Activated CD4-positive, alpha-beta T cell treated with anti-CD3 and anti-CD28 coated beads, Interleukin-2, amount 10 ng/mL, durations not matched to agents 7 days and 5 days (primary cell): ENCODE measurements at regions of chr6 and their contacts with region 1.

Region 1: DNA sequence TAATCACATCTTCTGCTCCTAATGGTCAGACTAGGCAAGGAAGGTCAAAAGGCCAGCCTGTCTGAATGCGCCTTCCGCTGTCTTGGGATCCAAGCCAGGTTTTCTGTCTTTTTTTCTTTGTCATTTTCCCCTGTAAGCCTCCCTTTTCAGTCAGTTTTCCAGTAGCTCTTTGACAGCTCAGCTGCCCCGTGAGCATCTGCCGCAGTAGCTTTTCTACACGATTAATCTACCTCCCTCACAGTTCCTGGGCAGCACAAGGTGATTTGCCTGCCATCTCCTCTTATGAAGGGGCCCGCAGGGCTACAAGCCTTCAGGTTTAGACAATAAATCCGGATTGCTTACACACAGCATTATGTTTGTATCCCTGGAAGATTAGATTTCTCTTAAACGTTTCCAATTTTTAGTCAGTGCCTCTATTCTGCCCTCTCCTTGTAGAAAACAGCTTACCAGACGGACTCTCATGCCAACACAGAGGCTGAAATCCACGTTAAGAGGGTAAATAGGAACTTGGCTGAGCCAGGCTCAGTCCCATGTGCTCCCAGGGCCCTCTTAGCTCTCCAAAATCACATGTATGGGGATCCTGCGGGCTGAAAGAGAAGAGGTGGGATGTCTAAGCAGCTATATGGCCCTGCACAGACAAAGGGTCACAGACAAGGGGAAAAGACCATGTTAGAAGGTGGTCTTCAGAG is 77.2 kb downstream of the LY86 start:
- DNase-seq: no peak
- H3K4me3 Mint-ChIP-seq: no peak overlapping the region
- H3K27ac Mint-ChIP-seq: no peak overlapping the region
- H3K4me1 Mint-ChIP-seq: peaks cover 73% of the 10 kb centered on the region
- H3K27me3 Mint-ChIP-seq: peaks cover 2% of the 10 kb centered on the region

Region 2: DNA sequence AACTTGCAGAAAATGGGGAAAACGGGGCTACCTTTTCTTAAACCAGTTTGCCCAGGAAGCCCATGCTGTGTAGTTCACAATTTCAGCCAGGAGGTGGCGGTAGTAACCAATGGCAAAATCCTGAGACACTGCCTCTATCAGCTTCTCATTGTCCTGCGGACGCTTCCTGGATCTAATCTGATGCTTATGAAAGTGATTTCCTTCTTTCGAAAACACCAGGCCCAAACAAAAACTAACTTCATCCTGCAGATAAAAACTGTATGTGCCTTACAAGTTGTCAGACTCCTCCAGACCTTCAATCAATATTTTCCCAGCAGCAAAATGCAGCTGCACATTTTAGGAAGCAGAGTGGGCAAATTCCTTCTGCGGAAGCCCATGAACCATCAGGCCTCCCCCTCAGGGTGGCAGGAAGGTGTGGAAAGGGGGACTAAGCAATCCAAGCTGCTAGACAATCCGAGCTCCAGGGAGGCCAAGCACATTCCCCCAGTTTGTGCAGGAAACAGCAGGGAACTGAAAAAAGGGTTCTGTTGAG is 11.3 kb after region 1 on chr6:
- CTCF ChIA-PET with region 1: interaction called, 11 read pairs
- POLR2A ChIA-PET with region 1: no interaction called
- DNase-seq: peak; percentile 87
- H3K4me3 Mint-ChIP-seq: no peak overlapping the region
- H3K27ac Mint-ChIP-seq: peak overlapping the region; percentile 91
- H3K4me1 Mint-ChIP-seq: peaks cover 44% of the 10 kb centered on the region
- H3K27me3 Mint-ChIP-seq: no peaks in the 10 kb centered on the region